ENCODE measurements at regions of chr1 and their contacts with region 1.

Region 1: GRCh38 chr1:212566522-212567479 is 41.8 kb upstream of the ATF3 start:
- DNase-seq: peak; percentile 85
- CTCF ChIP-seq: no peak

Region 2: DNA sequence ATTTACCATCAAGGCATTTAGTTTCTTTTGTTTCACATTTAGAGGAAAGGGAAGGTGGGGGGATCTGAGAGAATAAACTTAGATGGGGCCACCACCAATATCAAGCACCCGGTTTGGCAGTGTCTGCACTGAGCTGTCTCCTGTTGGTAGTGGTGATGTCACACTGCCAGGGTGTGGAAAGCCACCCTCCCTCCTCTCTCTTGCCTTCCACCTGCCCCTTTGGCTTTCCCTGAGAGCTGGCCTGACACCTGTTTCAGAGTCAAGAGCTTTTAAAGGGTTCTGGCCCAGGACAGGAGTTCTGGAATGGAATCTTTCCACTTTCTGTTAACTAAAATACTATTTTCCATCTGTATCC is 55.1 kb after region 1 on chr1:
- in situ Hi-C with region 1: loop called (anchors 10 kb)
- DNase-seq: no peak
- CTCF ChIP-seq: no peak

Region 3: GRCh38 chr1:212655668-212656423 is 89.0 kb after region 1 on chr1:
- in situ Hi-C with region 1: no loop called
- DNase-seq: no peak
- CTCF ChIP-seq: no peak

Region 4: DNA sequence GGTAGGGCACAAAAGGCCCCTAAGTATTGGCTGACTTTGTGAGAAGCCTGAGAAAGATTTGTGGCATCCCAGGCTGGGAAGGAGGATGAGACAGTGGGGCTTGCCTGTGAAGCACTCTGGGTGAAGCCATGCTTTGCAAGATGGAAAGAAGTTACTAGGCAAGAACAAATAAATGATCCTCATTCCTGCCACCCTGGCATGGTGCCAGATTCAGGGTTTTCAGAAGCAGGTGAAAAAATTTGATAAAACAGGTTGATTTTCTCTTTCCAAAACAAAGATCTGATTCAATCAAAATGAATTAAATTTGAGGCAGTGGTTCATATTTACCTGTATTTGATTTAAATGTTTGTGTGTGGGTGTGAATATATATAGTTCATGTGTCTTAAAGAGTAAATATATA is 1034.1 kb after region 1 on chr1:
- in situ Hi-C with region 1: no loop called
- DNase-seq: no peak
- CTCF ChIP-seq: no peak

Region 5: DNA sequence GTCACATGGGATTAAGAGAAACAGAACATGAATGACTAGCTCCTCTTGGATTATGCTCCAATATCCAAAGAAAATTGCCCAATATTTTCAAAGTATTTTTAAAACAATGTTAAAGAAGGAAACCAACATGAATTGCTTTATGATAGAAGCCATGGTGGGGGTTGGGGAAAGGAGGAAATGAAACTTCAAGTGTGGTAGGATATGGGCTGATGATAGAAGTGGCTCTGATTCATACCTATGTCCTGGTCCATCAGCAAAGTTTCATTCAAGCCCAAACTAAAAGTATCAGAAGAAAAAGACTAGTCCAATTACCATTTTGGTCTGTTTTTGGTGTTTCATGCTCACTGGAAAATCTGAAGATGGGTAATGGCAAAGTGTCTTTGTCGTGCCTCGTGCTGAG is 1316.8 kb after region 1 on chr1:
- in situ Hi-C with region 1: no loop called
- DNase-seq: no peak
- CTCF ChIP-seq: no peak